BJ (cell line): ENCODE measurements at regions of chr16 and their contacts with region 1.

Region 1: GRCh38 chr16:31142109-31143010 is 6.8 kb upstream of the PRSS8 start:
- DNase-seq: peak; percentile 90
- H3K4me3 ChIP-seq: peak overlapping the region; percentile 35
- H3K27me3 ChIP-seq: peaks cover 9% of the 10 kb centered on the region
- CTCF ChIP-seq: peak; percentile 96

Region 2: DNA sequence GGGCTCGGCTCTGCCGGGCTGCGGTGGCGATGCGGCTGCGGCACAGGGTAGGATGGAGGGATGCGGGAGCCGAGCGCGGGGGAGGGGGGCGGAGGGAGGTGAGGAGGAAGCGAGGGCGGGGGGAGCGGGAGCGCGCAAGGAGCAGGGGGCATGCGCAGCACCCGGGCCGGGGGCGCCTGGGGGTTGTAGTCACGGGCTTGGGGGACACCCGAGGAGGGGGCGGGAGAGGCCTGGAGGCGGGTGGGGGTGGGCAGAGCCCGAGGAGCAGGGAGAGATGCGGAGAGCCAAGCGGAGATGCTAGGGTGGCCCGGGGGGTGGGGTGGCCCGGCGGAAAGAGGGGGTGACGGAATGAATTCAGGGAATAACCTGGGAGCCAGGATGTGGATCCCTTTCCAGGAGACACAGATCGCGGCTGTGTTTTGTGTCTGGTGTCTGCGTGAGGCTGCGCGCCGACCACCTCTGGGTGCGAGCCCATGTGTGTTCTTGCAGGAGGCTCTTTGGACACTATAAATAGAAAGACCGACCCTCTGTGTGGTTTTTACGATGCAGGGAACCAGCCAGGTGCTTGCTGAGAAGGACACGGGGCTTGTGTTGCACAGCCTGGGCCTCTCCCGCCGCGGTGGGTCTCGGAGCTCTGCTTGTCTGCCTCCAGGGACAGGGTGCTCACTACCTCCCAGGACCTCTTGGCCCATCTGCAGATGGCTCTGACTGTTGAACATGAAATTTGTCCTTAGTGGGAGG is 131.6 kb before region 1 on chr16 and contains the start of gene STX1B:
- CTCF ChIA-PET with region 1: no interaction called
- POLR2A ChIA-PET with region 1: interaction called, 18 read pairs
- DNase-seq: no peak
- H3K4me3 ChIP-seq: peak within 1 kb of the TSS; percentile 50
- H3K27me3 ChIP-seq: 0 out of 2 replicates have a peak, but pooled peaks cover 2% of the 10 kb centered on the region
- CTCF ChIP-seq: no peak
- polyA plus RNA-seq, gene STX1B: 1.5 and 1.6 TPM in 2 replicates

Region 3: GRCh38 chr16:31130336-31131276 is 11.8 kb before region 1 on chr16:
- CTCF ChIA-PET with region 1: interaction called, 12 read pairs
- POLR2A ChIA-PET with region 1: no interaction called
- DNase-seq: no peak
- H3K4me3 ChIP-seq: no peak overlapping the region
- H3K27me3 ChIP-seq: no peaks in the 10 kb centered on the region
- CTCF ChIP-seq: no peak

Region 4: DNA sequence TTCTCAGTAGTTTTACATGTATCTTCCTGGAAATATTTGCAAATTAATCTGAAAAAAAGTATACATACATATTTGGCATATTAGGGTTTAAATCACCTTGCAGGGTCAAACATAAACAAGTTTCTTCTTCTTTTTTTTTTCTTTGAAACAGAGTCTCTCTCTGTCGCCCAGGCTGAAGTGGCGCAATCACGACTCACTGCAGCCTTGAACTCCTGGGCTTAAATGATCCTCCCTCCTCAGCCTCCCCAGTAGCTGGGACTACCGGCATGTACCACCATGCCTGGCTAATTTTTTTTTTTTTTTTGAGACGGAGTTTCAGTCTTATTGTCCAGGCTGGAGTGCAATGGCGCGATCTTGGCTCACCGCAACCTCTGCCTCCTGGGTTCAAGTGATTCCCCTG is 25.0 kb after region 1 on chr16:
- CTCF ChIA-PET with region 1: interaction called, 10 read pairs
- POLR2A ChIA-PET with region 1: no interaction called
- DNase-seq: no peak
- H3K4me3 ChIP-seq: no peak overlapping the region
- H3K27me3 ChIP-seq: no peaks in the 10 kb centered on the region
- CTCF ChIP-seq: no peak

Region 5: GRCh38 chr16:31202414-31203375 is 60.3 kb after region 1 on chr16 and contains the start of gene PYCARD:
- CTCF ChIA-PET with region 1: no interaction called
- POLR2A ChIA-PET with region 1: no interaction called
- DNase-seq: no peak
- H3K4me3 ChIP-seq: peak within 1 kb of the TSS; percentile 66
- H3K27me3 ChIP-seq: peaks cover 9% of the 10 kb centered on the region
- CTCF ChIP-seq: no peak
- polyA plus RNA-seq, gene PYCARD: 15.8 and 23.9 TPM in 2 replicates

Region 6: DNA sequence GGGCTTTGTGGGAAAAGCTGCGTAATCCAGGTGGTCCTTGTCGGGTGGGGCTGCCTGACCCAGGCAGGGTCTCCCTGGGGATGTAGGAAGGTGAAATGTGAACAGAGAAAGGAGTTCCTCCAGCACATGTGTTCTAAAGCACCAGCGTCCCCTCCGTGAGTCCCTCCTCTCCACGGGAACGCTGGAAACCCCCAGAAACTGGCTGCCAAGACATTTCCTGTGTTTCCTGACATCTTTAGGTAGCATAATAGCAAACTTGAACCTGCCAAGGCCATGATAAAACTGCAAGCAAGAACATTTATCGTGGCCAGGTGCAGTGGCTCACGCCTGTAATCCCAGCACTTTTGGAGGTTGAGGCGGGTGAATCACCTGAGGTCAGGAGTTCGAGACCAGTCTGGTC is 87.1 kb after region 1 on chr16:
- CTCF ChIA-PET with region 1: no interaction called
- POLR2A ChIA-PET with region 1: no interaction called
- DNase-seq: no peak
- H3K4me3 ChIP-seq: no peak overlapping the region
- H3K27me3 ChIP-seq: no peaks in the 10 kb centered on the region; the same call in 1 of the 2 replicates
- CTCF ChIP-seq: no peak

Region 7: GRCh38 chr16:31441956-31442355 is 299.6 kb after region 1 on chr16:
- CTCF ChIA-PET with region 1: interaction called, 13 read pairs
- POLR2A ChIA-PET with region 1: interaction called, 3 read pairs
- DNase-seq: no peak
- H3K4me3 ChIP-seq: peak overlapping the region; percentile 53
- H3K27me3 ChIP-seq: no peaks in the 10 kb centered on the region; the same call in 1 of the 2 replicates
- CTCF ChIP-seq: no peak